Psoas muscle (tissue), 8 donors: ENCODE measurements at regions of chr2 and their contacts with region 1.

Region 1: DNA sequence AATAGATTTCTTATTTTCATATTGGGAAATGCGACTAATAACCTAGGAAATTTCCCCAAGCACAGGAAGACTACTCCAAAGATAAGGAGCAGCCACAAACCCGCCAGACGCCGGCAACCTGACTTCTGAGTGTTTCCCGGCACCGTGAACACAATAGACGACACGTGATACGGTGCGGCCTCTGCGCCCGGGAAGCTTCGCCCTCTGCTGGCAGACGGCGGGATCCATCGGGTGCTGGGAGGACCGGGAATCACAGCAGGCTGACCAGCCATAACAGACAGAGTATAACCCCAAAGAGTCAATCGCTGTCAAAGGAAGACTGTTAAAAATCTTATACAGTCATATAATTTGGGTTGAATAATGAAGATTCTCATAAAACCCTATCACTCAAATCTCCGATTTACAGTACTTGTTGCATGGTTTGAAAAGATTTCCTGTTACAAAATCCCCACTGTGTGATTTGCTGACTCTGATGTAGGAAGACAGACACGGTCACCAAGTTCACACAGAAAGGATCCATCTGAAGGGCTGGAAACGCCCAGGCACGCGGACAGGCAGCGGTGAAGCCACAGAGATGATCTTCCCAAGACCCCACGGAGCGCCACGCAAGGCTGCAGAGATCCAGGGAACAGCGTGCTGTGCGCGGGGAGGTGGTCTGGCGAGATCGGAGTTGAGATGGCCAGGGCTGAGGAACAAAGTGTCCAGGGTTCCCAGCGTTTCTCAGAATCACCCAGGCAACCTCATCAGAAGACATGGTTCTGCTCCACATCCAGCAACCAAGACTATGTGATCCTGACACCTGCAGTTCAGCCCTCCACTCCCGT is 73.8 kb downstream of the EIPR1 start:
- DNase-seq: peak; percentile 84 to 89
- ATAC-seq: peak; percentile 97 to 100 (median 98)
- H3K4me3 ChIP-seq: peak overlapping the region; percentile 61
- H3K27ac ChIP-seq: no peak overlapping the region
- H3K4me1 ChIP-seq: peaks cover 6% of the 10 kb centered on the region
- H3K27me3 ChIP-seq: no peaks in the 10 kb centered on the region
- CTCF ChIP-seq: peak; percentile 95

Region 2: GRCh38 chr2:2839782-2840531 is 463.8 kb before region 1 on chr2:
- intact Hi-C with region 1: loop called in 1 of 2 experiments (anchors 10 kb)
- DNase-seq: no peak
- ATAC-seq: peak; percentile 29 to 77 (median 60)
- H3K4me3 ChIP-seq: no peak overlapping the region
- H3K27ac ChIP-seq: no peak overlapping the region
- H3K4me1 ChIP-seq: peaks cover 6% of the 10 kb centered on the region
- H3K27me3 ChIP-seq: no peaks in the 10 kb centered on the region
- CTCF ChIP-seq: no peak

Region 3: GRCh38 chr2:2856723-2857415 is 446.9 kb before region 1 on chr2:
- intact Hi-C with region 1: no loop called
- DNase-seq: no peak
- ATAC-seq: no peak
- H3K4me3 ChIP-seq: no peak overlapping the region
- H3K27ac ChIP-seq: no peak overlapping the region
- H3K4me1 ChIP-seq: no peaks in the 10 kb centered on the region
- H3K27me3 ChIP-seq: no peaks in the 10 kb centered on the region
- CTCF ChIP-seq: no peak

Region 4: GRCh38 chr2:3001615-3002560 is 301.9 kb before region 1 on chr2:
- intact Hi-C with region 1: loop called in 1 of 2 experiments (anchors 2 kb)
- DNase-seq: no peak
- ATAC-seq: peak in 1 of 4 donors; percentile 58
- H3K4me3 ChIP-seq: no peak overlapping the region
- H3K27ac ChIP-seq: no peak overlapping the region
- H3K4me1 ChIP-seq: no peaks in the 10 kb centered on the region
- H3K27me3 ChIP-seq: peaks cover 0 to 3% (median 0%) of the 10 kb centered on the region in 3 donors
- CTCF ChIP-seq: peak; percentile 24

Region 5: GRCh38 chr2:3192920-3193319 is 110.9 kb before region 1 on chr2:
- intact Hi-C with region 1: loop called (anchors 1 to 5 kb)
- DNase-seq: peak; percentile 51 to 79
- ATAC-seq: peak; percentile 89 to 99 (median 96)
- H3K4me3 ChIP-seq: no peak overlapping the region
- H3K27ac ChIP-seq: no peak overlapping the region
- H3K4me1 ChIP-seq: peaks cover 4% of the 10 kb centered on the region
- H3K27me3 ChIP-seq: no peaks in the 10 kb centered on the region
- CTCF ChIP-seq: peak; percentile 41

Region 6: DNA sequence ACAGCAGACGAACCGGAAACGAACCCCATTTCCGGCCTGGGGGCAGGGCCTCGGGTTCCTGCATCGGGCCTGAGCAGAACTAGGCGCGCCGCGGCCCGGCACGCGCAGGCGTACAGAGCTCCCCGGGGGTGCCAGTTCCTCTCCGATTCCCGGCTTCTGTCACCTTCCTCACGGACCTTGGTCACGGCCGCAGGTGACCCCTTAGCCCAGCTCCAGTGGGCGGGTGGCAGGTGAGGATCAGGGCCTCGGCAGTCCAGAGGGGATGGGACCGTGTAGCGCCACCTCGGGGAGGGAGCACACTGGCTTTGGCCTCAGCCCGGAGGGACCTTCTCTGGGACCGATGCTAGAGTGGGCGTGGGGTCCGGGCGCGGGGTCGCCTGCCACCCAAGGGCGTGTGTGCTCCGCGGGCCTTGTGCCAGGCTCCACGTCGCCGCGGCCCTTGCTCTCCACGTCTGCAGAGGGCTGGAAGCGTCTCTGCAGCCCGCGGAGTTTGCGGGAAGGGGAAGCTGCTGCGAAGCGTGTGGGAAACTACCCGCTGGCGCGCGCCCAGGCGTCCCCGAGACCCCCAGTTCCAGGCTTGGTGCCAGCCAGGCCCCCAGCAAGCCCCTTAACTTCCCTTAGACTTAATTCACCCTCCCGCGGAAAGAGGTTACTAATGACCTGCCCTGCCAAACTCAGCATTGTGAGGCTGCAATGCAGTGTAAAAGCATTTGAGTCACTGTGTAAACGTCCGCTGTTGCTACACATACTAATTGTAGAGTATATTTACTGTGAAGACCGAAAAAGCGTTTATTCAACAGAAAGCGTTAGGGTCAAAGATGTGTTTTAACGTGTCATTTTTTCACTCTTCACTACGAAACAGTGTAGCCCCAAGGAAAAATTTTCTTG is 76.1 kb after region 1 on chr2 and contains the start of gene TRAPPC12:
- intact Hi-C with region 1: loop called in 1 of 2 experiments (anchors 2 kb)
- DNase-seq: peak; percentile 89 to 95
- ATAC-seq: peak; percentile 88 to 91 (median 89)
- H3K4me3 ChIP-seq: peak within 1 kb of the TSS; percentile 92
- H3K27ac ChIP-seq: peak within 1 kb of the TSS; percentile 98
- H3K4me1 ChIP-seq: peaks cover 34% of the 10 kb centered on the region
- H3K27me3 ChIP-seq: no peaks in the 10 kb centered on the region
- CTCF ChIP-seq: peak; percentile 42
- total RNA-seq, gene TRAPPC12: 56.7 to 90.3 (median 66.9) TPM